Activated CD4-positive, alpha-beta memory T cell treated with anti-CD3 and anti-CD28 coated beads, Interleukin-2, amount 10 ng/mL, durations not matched to agents 7 days and 5 days (primary cell): ENCODE measurements at regions of chr3 and their contacts with region 1.

Region 1: GRCh38 chr3:187738331-187739093 is 6.8 kb downstream of the BCL6 start:
- DNase-seq: peak; percentile 77
- H3K4me3 Mint-ChIP-seq: peak overlapping the region; percentile 89
- H3K27ac Mint-ChIP-seq: peak overlapping the region; percentile 99
- H3K4me1 Mint-ChIP-seq: peaks cover 48% of the 10 kb centered on the region
- H3K27me3 Mint-ChIP-seq: peaks cover 3% of the 10 kb centered on the region

Region 2: DNA sequence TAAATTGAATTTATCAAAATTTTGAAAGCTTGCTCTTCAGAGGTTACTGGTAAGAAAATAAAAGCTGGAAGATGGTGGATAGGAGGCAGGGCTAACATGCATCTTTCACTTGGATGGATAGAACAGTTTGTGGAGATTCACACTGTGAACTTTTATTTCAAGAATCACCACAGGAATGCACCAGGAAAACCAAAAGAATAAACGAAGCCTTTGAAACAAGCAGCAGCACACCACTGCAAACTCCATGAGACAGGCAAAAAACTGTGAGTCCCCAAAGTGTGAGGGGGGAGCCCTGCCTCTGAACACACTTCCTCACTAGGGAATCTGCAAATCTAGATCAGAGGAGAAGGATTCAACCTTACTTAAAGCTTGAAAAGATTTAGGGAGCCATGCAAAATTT is 248.1 kb before region 1 on chr3:
- CTCF ChIA-PET with region 1: no interaction called
- POLR2A ChIA-PET with region 1: no interaction called
- DNase-seq: no peak
- H3K4me3 Mint-ChIP-seq: no peak overlapping the region
- H3K27ac Mint-ChIP-seq: no peak overlapping the region
- H3K4me1 Mint-ChIP-seq: no peaks in the 10 kb centered on the region
- H3K27me3 Mint-ChIP-seq: peaks cover 23% of the 10 kb centered on the region

Region 3: DNA sequence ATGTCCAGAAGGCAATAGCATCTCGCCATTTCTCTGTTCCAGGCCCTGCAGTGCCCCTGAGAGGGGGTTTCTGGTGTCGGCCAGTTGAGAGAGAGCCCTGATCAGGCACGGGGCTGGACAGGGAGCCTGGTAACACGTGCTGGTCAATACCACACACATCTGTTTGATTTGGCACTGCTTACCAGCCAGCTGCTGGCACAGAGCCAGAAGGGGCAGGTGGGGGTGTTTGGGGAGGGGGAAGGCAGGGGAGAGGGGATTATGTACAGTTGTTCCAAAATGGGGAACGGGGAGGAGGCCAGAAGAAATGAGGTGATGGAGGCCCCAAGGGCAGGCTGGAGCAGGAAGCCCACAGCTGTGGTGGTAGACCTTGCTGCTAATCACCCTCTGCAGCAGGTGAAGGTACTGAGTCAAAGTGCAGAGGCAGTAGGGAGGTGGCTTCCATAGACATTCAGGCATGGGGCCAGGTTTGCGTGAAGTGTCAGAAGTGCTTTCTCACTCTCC is 261.9 kb after region 1 on chr3:
- CTCF ChIA-PET with region 1: interaction called, 25 read pairs
- POLR2A ChIA-PET with region 1: interaction called, 73 read pairs
- DNase-seq: peak; percentile 29
- H3K4me3 Mint-ChIP-seq: peak overlapping the region; percentile 72
- H3K27ac Mint-ChIP-seq: peak overlapping the region; percentile 99
- H3K4me1 Mint-ChIP-seq: peaks cover 74% of the 10 kb centered on the region
- H3K27me3 Mint-ChIP-seq: no peaks in the 10 kb centered on the region

Region 4: DNA sequence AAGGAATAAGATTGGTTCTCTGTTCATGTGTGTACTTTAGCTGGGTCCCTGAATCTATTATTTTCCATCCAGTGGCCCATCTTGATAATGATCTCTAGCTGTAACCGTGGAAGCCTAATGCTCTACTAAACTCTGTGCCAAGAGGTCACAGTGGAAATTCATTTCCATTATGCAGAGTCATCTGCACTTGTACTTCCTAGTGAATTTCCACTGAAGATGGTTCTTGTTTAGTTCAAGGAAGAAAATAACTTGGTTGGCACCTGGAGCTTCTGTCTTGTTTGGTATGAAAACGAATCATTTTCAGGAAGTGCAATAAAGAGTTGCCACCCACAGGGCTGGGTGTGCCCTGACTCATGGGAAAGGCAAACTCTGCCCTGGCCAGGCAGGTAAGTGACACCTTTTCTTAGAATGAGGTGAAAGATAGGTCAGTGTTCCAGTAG is 425.8 kb after region 1 on chr3:
- CTCF ChIA-PET with region 1: interaction called, 37 read pairs
- POLR2A ChIA-PET with region 1: interaction called, 11 read pairs
- DNase-seq: no peak
- H3K4me3 Mint-ChIP-seq: no peak overlapping the region
- H3K27ac Mint-ChIP-seq: peak overlapping the region; percentile 70
- H3K4me1 Mint-ChIP-seq: peaks cover 63% of the 10 kb centered on the region
- H3K27me3 Mint-ChIP-seq: no peaks in the 10 kb centered on the region

Region 5: DNA sequence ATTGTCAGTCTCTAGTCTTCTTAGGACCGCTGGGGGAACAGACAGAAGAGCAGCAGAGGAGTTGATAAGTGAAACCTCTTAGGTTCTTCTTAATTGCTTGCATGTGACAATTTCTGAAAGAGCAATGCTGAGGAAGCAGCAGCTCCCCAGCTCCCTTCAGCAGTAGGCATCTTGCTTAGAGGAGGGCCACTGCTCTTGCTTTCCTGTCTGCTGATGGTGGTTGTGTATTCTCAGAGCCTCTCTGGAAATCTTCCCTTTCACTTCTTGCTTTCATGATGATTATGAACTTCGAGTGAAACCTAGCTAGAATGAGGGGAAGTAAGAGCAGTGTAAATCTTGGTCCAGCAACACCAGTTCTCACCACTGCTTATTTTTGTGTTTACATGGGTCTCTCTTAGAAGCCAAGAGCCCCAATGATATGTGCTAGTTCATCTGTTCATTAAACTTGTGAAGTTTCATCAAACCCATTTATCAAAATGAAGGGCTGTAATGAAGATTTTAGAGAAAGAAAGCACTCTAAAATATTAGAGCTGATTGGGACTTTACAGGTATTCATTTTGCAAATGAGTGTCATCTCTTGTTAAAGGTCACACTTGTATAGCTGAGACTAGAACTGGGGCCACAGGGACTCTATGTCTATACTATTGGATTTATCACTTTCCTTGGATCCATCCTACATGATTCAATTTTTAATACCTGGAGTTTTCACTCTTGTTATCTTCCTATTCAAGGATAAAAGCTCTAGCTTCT is 662.2 kb after region 1 on chr3:
- CTCF ChIA-PET with region 1: interaction called, 25 read pairs
- POLR2A ChIA-PET with region 1: interaction called, 3 read pairs
- DNase-seq: peak; percentile 18
- H3K4me3 Mint-ChIP-seq: no peak overlapping the region
- H3K27ac Mint-ChIP-seq: no peak overlapping the region
- H3K4me1 Mint-ChIP-seq: peaks cover 41% of the 10 kb centered on the region
- H3K27me3 Mint-ChIP-seq: peaks cover 3% of the 10 kb centered on the region

Region 6: GRCh38 chr3:188914552-188914951 is 1176.0 kb after region 1 on chr3:
- CTCF ChIA-PET with region 1: interaction called, 53 read pairs
- POLR2A ChIA-PET with region 1: interaction called, 8 read pairs
- DNase-seq: no peak
- H3K4me3 Mint-ChIP-seq: no peak overlapping the region
- H3K27ac Mint-ChIP-seq: peak overlapping the region; percentile 17
- H3K4me1 Mint-ChIP-seq: peaks cover 41% of the 10 kb centered on the region
- H3K27me3 Mint-ChIP-seq: peaks cover 2% of the 10 kb centered on the region

Region 7: DNA sequence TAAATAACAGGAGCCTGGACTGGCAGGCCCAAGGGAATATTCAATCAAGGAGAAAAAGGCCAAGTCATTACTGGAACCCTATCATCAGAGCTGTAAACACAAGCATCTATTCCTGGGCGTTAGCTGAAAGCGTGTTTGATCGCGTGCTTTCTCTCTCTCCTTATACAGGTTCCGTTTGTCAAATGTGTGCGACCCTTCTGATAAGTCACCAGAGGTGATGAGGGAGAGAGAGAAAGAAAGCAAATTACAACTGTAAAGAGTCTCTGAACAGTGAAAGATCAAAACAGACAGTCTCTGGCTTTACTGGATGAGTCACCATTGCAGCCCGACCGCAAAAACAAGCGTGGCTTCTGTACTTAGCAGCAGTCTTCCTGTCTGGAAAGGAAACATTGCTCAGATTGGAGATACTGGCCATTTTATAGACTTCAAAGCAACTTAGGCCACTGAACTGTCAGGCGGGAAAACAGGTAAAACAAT is 1393.8 kb after region 1 on chr3:
- CTCF ChIA-PET with region 1: interaction called, 56 read pairs
- POLR2A ChIA-PET with region 1: interaction called, 12 read pairs
- DNase-seq: peak; percentile 88
- H3K4me3 Mint-ChIP-seq: peak overlapping the region; percentile 46
- H3K27ac Mint-ChIP-seq: peak overlapping the region; percentile 94
- H3K4me1 Mint-ChIP-seq: peaks cover 39% of the 10 kb centered on the region
- H3K27me3 Mint-ChIP-seq: no peaks in the 10 kb centered on the region